ENCODE measurements at regions of chr22 and their contacts with region 1.

Region 1: GRCh38 chr22:20156611-20157429 is 6.0 kb upstream of the CCDC188 start:
- DNase-seq: no peak
- H3K4me3 ChIP-seq: no peak overlapping the region
- H3K27ac ChIP-seq: no peak overlapping the region
- H3K4me1 ChIP-seq: no peaks in the 10 kb centered on the region
- H3K27me3 ChIP-seq: no peaks in the 10 kb centered on the region
- CTCF ChIP-seq: peak; percentile 100
- POLR2A ChIP-seq: no peak

Region 2: DNA sequence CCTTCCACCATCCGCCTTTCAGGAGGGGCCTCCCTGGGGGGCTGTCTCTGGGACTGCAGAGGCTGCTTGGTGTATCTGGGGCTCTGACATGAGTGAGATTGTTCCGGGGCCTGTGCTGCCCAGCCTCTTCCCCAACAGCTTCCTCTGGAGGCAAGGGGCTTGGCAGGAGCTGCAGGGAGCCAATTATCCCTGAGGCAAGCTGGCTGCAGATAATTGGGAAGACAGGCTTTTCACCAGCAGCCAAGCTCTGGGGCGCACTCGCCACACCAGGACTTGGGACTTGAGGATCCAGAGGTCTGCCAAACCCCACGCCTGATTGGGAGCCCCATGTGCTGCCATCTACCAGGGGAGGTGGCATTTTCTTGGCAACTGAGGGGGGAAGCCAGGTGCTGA is 126.8 kb after region 1 on chr22:
- intact Hi-C with region 1: loop called (anchors 2 kb)
- DNase-seq: no peak
- H3K4me3 ChIP-seq: no peak overlapping the region
- H3K27ac ChIP-seq: no peak overlapping the region
- H3K4me1 ChIP-seq: no peaks in the 10 kb centered on the region
- H3K27me3 ChIP-seq: no peaks in the 10 kb centered on the region
- CTCF ChIP-seq: no peak
- POLR2A ChIP-seq: no peak

Region 3: GRCh38 chr22:20654343-20655208 is 497.8 kb after region 1 on chr22:
- intact Hi-C with region 1: no loop called
- DNase-seq: peak; percentile 56 to 84
- H3K4me3 ChIP-seq: no peak overlapping the region
- H3K27ac ChIP-seq: no peak overlapping the region
- H3K4me1 ChIP-seq: no peaks in the 10 kb centered on the region
- H3K27me3 ChIP-seq: no peaks in the 10 kb centered on the region
- CTCF ChIP-seq: no peak
- POLR2A ChIP-seq: no peak

Measured in vagina (tissue), 2 donors.